CD4-positive, alpha-beta memory T cell (primary cell): ENCODE measurements at regions of chr14 and their contacts with region 1.

Region 1: DNA sequence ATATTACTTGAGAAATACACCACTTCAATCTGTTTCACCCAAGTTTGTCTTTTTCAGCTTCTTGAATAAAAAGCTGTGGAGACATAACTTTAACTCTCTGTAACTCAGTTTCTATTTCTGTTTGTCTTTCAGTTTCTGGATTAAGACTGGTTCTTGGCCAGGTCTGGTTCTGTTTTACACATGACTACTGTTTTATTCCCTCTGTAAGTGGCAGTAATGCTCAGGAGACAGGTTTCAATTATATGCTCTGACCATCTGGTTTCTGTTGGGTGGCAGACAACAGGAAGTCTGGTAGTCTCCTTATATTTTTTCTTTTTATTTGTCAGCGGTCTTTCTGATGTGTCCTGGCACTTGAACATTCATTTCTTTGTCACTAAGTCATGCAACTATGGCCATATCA is 102.9 kb downstream of the RPS29 start:
- DNase-seq: no peak
- H3K4me3 ChIP-seq: no peak overlapping the region
- H3K4me3 Mint-ChIP-seq: no peak overlapping the region
- H3K27ac ChIP-seq: no peak overlapping the region
- H3K27ac Mint-ChIP-seq: no peak overlapping the region
- H3K4me1 ChIP-seq: no peaks in the 10 kb centered on the region
- H3K4me1 Mint-ChIP-seq: peaks cover 0 to 4% (median 0%) of the 10 kb centered on the region in 4 donors
- H3K27me3 ChIP-seq: no peaks in the 10 kb centered on the region
- H3K27me3 Mint-ChIP-seq: peaks cover 10 to 12% of the 10 kb centered on the region in 2 donors

Region 2: GRCh38 chr14:49497725-49498348 is 14.6 kb after region 1 on chr14:
- CTCF ChIA-PET with region 1: interaction called, 16 read pairs
- POLR2A ChIA-PET with region 1: no interaction called
- intact Hi-C with region 1: no loop called
- DNase-seq: peak in 4 of 5 donors; percentile 37 to 46 (median 42)
- H3K4me3 ChIP-seq: no peak overlapping the region
- H3K4me3 Mint-ChIP-seq: no peak overlapping the region
- H3K27ac ChIP-seq: no peak overlapping the region
- H3K27ac Mint-ChIP-seq: no peak overlapping the region
- H3K4me1 ChIP-seq: no peaks in the 10 kb centered on the region
- H3K4me1 Mint-ChIP-seq: peaks cover 0 to 2% (median 0%) of the 10 kb centered on the region in 4 donors
- H3K27me3 ChIP-seq: no peaks in the 10 kb centered on the region
- H3K27me3 Mint-ChIP-seq: peaks cover 19 to 34% of the 10 kb centered on the region in 2 donors

Region 3: DNA sequence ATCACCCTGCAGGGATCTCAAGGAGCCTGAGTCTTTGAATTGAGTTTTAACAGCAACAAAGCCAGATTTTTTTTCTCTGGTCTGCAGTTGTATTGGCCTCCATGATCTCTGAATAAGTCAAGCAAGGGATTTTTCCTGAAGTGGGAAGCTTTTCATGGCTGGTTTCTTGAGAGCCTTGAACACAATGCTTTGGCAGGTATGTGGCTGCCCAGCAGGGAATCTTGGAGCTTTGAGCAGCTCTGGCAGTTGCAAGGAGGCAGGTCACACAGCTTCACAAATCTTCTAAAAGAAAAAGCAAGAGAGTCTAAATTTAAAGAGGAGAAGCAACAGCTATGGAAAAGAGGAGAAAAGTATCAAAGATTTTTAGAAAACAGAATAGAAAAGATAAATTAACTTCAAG is 42.8 kb after region 1 on chr14:
- CTCF ChIA-PET with region 1: no interaction called
- POLR2A ChIA-PET with region 1: no interaction called
- intact Hi-C with region 1: no loop called
- DNase-seq: no peak
- H3K4me3 ChIP-seq: no peak overlapping the region
- H3K4me3 Mint-ChIP-seq: no peak overlapping the region
- H3K27ac ChIP-seq: no peak overlapping the region
- H3K27ac Mint-ChIP-seq: no peak overlapping the region
- H3K4me1 ChIP-seq: no peaks in the 10 kb centered on the region
- H3K4me1 Mint-ChIP-seq: no peaks in the 10 kb centered on the region
- H3K27me3 ChIP-seq: no peaks in the 10 kb centered on the region
- H3K27me3 Mint-ChIP-seq: peaks cover 11 to 18% of the 10 kb centered on the region in 2 donors